Posterior vena cava (tissue), 2 donors: ENCODE measurements at regions of chr18 and their contacts with region 1.

Region 1: DNA sequence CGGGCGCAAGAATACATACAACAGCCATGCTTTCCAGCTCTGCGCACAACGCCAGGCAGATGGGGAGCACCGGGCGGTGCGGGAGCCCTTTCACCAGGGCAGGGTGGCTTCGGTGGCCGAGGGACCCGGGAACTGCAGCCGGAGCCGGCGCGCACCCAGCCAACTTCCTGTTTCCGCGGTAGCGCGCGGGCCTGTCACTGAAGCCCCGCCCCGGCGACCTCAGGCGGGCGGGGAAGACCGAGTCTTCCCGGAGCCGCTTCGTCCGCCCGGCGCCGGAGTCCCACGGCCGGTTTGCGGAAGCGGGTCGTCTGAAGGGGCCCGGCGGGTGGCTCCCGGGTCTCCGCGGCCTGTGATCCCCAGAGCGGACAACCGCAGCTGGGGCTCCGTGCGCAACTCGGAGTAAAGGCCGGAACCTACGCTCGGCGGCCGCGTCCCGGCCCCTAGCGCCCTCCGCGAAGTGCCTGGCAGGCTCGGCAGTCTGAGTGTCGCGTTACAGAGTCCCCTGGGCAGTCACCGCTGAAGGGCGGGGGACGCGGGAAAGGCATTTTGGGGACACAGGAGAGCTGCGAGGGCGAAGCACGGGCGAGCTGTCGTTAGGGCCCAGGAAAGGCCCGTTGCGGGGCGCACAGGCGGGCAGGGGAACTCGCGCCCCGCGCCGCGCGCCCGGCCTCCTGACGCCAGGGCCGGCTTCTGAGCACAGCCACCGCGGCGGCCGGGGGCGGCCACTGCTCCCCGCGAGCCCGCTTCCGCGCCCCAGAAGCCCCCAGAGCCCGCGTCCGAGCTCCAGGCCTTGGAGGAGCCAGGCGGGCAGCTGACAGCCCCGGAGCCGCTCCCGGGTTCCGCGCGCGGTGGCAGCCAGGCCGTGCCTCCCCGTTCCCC is at the start of gene MPPE1:
- DNase-seq: peak; percentile 97
- total RNA-seq, gene MPPE1: 26.2 to 39.6 TPM

Region 2: DNA sequence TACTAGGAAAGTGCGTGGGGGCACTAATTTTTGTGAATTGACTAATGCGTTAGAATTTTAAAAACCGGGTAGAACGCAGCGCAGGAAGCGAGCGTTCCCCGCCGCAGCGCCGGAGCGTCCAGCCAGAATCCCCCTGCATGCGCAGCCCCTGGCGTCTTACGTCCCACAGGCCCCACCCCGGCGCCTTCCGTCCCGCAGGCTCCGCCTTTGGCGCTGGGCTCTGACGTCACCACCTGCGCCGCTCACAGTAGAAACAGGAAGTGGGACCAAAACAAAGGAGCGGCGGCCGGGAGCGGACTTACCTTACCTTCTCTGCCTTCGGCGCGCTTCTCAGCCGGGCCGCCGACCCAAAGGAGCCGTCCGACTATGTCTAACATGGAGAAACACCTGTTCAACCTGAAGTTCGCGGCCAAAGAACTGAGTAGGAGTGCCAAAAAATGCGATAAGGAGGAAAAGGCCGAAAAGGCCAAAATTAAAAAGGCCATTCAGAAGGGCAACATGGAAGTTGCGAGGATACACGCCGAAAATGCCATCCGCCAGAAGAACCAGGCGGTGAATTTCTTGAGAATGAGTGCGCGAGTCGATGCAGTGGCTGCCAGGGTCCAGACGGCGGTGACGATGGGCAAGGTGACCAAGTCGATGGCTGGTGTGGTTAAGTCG is 57.1 kb before region 1 on chr18 and contains the start of gene CHMP1B:
- intact Hi-C with region 1: loop called in 1 of 2 experiments (anchors 10 kb)
- DNase-seq: peak; percentile 100
- total RNA-seq, gene CHMP1B: 44.0 to 44.4 TPM